Posterior vena cava (tissue), 2 donors: ENCODE measurements at regions of chr4 and their contacts with region 1.

Region 1: DNA sequence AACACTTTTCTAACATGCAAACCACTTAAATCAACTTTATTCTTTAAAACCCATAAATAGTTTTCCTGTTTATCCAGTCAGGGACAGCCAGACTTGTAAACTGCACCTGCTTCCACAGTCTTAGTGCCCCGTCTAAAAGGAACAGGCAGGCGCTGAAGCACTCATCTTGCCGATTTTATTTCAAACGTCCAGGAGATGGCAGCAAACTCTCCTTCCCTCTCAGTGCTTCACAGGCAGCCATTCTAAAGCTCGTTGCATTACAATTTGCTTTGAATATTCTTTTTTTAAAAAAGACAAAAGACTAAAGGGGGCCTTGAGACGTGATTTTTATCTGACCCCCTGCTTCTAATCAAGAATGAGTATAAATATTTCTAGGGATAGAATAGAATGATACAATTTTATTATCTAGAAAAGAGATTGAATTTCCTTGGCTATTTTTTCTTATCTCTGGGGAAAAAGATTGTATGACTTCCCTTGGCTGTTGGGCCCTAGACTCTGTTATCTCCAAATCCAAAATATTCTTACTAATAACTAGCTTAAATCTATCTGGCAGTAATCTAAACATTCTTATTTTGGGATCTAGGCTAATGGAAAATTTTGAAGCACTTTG is 93.6 kb upstream of the MYOZ2 start:
- DNase-seq: no peak

Region 2: DNA sequence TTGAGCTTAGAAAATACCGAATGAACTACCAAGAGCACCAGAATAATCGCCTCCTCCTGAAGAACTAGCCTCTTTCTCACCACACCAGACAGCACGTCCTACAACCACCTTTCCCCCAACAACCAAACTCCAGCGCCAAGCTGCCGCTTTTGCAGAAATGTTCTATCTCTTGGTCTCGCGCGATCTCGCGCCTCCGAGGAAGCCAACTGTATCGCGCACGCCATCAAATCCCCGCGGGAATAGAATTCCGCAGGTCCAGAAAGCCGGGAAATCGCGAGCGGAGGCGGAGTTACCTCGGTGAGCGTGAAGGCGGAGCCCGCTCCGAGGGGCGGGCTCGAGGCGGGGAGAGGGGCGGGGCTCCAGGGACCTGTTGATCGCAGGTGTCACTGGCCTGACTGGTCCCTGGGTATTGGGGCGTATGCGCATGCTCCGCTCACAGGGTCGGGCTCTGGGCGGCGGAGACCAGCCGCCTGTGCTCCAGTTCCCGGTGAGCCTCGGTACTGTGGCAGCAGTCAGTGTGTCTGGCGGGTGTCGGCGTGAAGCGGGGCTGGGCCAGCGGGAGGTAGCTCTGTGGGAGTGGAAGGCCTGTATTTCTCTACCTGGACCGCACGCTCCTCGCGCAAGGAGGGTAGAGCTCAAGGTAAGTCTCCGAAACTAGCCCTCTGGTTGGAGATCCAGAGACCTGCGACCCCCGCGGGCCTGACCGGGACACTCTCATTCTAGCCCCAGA is 170.3 kb after region 1 on chr4 and contains the start of gene USP53:
- intact Hi-C with region 1: loop called (anchors 5 to 10 kb)
- DNase-seq: peak; percentile 99
- total RNA-seq, gene USP53: 87.6 to 134 TPM

Region 3: GRCh38 chr4:119299741-119300100 is 257.7 kb after region 1 on chr4:
- intact Hi-C with region 1: loop called in 1 of 2 experiments (anchors 5 kb)
- DNase-seq: no peak